ENCODE measurements at regions of chr16 and their contacts with region 1.

Region 1: GRCh38 chr16:66830422-66831404 is at the start of gene NAE1:
- DNase-seq: peak; percentile 88
- ATAC-seq: peak; percentile 98
- H3K4me3 Mint-ChIP-seq: peak within 1 kb of the TSS; percentile 73
- H3K27ac Mint-ChIP-seq: peak within 1 kb of the TSS; percentile 78
- H3K4me1 Mint-ChIP-seq: peaks cover 32% of the 10 kb centered on the region
- H3K27me3 Mint-ChIP-seq: no peaks in the 10 kb centered on the region
- CTCF ChIP-seq: peak; percentile 98
- total RNA-seq, gene NAE1: 115 to 123 TPM

Region 2: DNA sequence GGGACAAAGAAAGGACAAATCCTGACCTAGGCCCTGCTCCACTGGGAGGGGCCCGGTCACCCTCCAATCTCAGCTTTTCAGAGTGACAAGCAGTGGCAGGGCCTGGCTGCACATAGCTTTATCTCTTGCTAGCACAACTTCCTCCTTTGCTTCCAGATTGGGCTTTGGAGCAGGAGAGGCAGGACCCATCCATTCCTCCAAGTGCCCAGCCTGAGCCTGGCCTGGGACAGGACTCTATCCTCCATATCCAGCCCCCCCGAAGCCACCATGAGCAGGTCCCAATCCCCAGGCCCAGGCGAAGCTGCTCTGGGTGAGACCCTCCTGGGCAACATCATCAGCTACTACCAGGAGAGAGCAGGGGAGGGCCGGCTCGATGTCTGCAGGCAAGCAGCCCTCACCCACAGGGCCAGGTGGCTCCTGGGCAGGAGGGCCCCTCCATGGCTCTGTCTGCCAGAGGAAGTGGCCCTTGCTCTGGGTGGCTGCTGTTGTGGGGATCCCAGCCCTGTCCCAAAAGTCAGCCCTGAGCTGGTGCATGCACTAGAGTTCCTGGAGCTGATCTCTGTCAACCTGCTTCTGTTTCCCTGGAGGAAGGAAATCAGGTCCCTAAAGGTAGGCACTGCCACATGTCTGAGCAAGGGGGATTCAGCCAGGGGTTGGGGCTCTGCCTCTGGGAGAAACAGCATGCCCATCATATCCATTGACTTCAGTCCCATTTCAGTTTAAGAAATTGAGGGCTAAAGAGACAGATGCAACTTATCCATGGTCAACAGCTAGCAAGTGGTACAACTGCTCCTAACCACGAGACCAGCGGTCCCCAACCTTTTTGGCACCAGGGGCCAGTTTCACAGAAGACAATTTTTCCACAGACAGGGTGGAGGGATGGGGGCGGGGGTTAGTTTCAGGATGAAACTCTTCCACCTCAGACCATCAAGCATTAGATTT is 339.7 kb before region 1 on chr16:
- CTCF ChIA-PET with region 1: no interaction called
- POLR2A ChIA-PET with region 1: no interaction called
- intact Hi-C with region 1: no loop called
- DNase-seq: no peak
- ATAC-seq: no peak
- H3K4me3 Mint-ChIP-seq: no peak overlapping the region
- H3K27ac Mint-ChIP-seq: no peak overlapping the region
- H3K4me1 Mint-ChIP-seq: peaks cover 7% of the 10 kb centered on the region
- H3K27me3 Mint-ChIP-seq: no peaks in the 10 kb centered on the region
- CTCF ChIP-seq: no peak

Region 3: DNA sequence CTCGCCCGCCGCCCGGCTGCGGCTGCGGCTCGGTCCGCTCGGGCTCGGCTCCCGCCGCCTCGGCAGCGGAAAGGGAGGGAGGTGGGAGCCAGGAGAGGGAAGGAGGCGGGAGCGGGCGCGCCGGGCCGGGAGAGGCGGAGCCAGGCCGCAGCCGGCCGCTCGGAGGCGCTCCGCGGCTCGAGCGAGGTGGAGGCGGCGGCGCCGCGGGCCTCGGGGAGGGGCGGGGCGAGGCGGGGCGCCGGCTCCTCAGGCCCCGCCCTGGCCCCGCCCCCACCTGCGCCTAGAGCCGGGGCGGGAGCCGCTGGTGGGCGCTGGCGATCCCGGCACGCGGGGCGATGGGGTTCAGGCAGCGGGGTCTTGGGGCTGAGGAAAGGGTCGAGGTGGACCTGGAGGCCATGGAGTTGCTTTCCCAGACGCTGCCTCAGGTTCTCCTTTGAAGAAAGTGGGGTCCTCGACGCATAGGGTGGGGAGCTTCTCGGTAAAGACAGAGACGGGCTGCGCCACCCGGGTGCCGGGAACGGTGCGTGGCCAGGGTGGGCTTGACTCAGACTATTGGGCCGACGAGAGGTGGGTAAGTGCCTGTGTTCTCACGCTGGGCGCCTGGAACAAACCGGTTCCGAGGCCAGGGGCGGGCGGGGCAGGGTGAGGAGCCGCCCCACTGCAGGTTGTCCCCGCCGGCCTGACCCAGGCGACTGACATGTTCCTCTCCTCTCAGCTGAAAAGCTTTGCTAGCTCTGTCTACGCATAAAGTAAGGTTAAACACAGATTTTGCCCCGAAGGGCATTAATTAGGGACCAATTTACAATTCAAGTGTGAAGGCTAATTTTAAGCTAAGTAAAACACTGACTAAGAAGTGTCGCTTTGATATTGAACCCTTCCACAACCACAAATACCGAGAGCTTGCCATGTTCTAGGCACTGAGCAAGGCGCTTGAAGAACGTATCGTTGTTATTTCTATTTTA is 133.8 kb before region 1 on chr16 and contains the start of gene CMTM4:
- CTCF ChIA-PET with region 1: interaction called, 10 read pairs
- POLR2A ChIA-PET with region 1: interaction called, 3 read pairs
- intact Hi-C with region 1: no loop called
- DNase-seq: peak; percentile 70
- ATAC-seq: peak; percentile 97
- H3K4me3 Mint-ChIP-seq: peak within 1 kb of the TSS; percentile 74
- H3K27ac Mint-ChIP-seq: no peak within 1 kb of the TSS
- H3K4me1 Mint-ChIP-seq: peaks cover 12% of the 10 kb centered on the region
- H3K27me3 Mint-ChIP-seq: peaks cover 13% of the 10 kb centered on the region
- CTCF ChIP-seq: peak; percentile 29
- total RNA-seq, gene CMTM4: 3.2 to 3.5 TPM

Region 4: DNA sequence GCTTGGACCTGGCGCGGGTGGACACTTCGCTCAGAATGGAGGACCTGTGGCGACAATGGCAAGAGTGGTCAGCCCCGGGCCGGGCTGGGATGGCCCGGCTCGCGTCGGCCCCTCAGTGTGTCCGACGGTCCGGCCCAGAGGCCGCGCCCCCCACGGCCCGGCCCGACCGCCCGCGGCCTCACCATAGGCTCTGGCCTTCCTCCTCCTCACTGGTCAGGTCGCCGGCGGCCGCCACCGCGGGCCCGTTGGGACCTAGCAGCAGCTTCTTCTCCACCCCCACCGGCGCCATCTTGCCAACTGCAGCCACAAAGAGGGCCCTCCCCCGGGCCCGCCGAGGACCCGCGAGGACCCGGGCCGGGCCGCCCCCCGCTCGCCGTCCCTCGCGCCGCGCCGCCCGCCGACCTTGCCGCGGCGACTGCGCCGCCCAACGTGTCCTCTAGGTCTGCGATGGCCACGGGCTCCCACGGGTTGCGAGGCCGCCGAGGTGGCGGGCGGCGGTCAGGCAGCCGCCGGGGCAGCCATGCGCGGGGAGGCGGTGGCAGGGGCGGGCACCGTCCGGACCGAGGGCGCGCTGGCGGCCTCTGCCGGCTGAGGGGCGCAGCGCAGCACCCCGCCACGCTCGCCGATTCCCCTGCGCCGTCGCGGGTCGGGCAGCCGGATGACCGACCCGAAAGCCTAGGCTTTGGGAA is 79.3 kb before region 1 on chr16 and contains the start of gene DYNC1LI2:
- CTCF ChIA-PET with region 1: interaction called, 25 read pairs
- POLR2A ChIA-PET with region 1: no interaction called
- intact Hi-C with region 1: no loop called
- DNase-seq: peak; percentile 85
- ATAC-seq: peak; percentile 97
- H3K4me3 Mint-ChIP-seq: peak within 1 kb of the TSS; percentile 82
- H3K27ac Mint-ChIP-seq: peak within 1 kb of the TSS; percentile 88
- H3K4me1 Mint-ChIP-seq: peaks cover 42% of the 10 kb centered on the region
- H3K27me3 Mint-ChIP-seq: peaks cover 5% of the 10 kb centered on the region
- CTCF ChIP-seq: peak; percentile 88
- total RNA-seq, gene DYNC1LI2: 35.0 to 39.5 TPM

Region 5: GRCh38 chr16:66844342-66845079 is 13.8 kb after region 1 on chr16 and contains the start of gene CA7:
- CTCF ChIA-PET with region 1: interaction called, 71 read pairs
- POLR2A ChIA-PET with region 1: interaction called, 5 read pairs
- intact Hi-C with region 1: no loop called
- DNase-seq: no peak
- ATAC-seq: peak; percentile 49
- H3K4me3 Mint-ChIP-seq: peak within 1 kb of the TSS; percentile 43
- H3K27ac Mint-ChIP-seq: no peak within 1 kb of the TSS
- H3K4me1 Mint-ChIP-seq: peaks cover 11% of the 10 kb centered on the region
- H3K27me3 Mint-ChIP-seq: peaks cover 40% of the 10 kb centered on the region
- CTCF ChIP-seq: no peak
- total RNA-seq, gene CA7: 0.27 TPM in 1 of 2 experiments, not detected in the other

Region 6: DNA sequence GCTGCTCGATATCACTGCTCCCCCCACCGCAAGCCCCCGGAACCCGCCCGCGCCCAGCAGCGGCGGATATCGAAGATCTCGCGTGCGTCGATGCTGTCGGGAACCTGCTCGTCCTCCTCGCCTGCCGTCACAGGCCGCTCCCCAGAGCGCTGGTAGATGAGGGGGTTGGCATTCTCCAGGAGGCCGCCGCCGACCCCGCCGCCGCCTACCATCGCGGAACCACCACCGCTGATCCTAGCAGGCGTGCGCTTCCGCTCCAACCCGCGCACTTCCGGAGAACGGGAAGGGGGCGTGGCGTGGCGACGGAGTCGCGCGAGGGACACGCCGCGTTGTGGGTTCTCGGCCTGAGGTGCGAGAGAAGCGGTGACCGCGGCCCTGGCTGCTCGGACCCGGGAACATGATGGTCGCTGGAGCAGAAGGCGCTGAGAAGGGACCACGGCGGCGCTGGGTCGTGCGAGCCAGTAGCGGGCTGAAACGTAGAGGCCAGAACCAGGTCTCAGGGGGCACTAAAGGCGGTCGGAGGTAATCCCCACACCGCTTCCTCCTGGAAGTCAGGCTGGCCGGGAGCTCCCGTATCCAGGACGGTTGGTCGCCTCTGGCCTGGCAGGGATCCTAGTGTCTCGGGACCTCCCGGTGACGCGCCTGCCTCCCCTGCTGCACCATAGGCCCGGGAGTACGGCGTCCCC is 103.6 kb after region 1 on chr16 and contains the start of gene CIAO2B:
- CTCF ChIA-PET with region 1: interaction called, 17 read pairs
- POLR2A ChIA-PET with region 1: interaction called, 4 read pairs
- intact Hi-C with region 1: no loop called
- DNase-seq: peak; percentile 89
- ATAC-seq: peak; percentile 84
- H3K4me3 Mint-ChIP-seq: peak within 1 kb of the TSS; percentile 99
- H3K27ac Mint-ChIP-seq: peak within 1 kb of the TSS; percentile 98
- H3K4me1 Mint-ChIP-seq: peaks cover 47% of the 10 kb centered on the region
- H3K27me3 Mint-ChIP-seq: no peaks in the 10 kb centered on the region
- CTCF ChIP-seq: no peak
- total RNA-seq, gene CIAO2B: 150 to 162 TPM

Region 7: DNA sequence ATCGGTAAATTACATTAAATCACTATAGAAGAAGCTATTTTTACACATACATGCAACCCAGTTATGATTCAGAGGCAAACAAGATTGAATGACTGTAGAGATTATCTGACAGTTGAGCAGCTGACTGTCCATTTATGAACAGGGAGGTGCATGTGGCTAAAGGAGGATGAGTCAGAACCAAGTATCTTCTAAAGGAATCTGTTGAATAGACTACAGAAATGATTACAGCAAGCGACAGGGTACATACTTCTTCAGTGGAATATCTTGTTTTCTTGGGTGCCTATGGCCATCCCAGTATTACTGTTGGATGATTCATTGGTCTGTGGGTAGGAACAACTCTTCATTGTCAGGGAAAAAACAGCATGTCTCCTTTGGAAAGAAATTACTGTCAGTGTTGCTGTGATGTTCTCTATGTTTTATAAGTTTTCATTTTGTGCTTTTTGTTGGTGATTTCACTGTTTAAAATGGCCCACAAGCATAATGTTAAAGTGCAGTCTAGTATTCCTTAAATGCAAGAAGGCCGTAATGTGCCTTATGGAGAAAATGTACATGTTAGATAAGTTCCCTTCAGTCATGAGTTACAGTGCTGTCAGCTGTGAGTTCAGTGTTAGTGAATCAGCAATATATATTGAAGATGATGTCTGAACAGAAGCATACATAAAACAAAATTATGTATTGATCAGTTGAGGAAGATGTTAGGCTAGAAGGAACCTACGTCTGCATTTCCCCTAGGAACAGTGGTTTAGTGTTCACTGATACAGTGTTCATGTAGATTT is 225.2 kb after region 1 on chr16:
- CTCF ChIA-PET with region 1: no interaction called
- POLR2A ChIA-PET with region 1: no interaction called
- intact Hi-C with region 1: no loop called
- DNase-seq: peak; percentile 29
- ATAC-seq: peak; percentile 78
- H3K4me3 Mint-ChIP-seq: no peak overlapping the region
- H3K27ac Mint-ChIP-seq: peak overlapping the region; percentile 70
- H3K4me1 Mint-ChIP-seq: peaks cover 43% of the 10 kb centered on the region
- H3K27me3 Mint-ChIP-seq: no peaks in the 10 kb centered on the region
- CTCF ChIP-seq: no peak

Measured in activated CD8-positive, alpha-beta T cell treated with anti-CD3 and anti-CD28 coated beads for 36 hours (primary cell).